Pancreas (tissue), 10 donors: ENCODE measurements at regions of chr2 and their contacts with region 1.

Region 1: GRCh38 chr2:48600204-48600813 is 17.3 kb upstream of the GTF2A1L start:
- DNase-seq: no peak
- ATAC-seq: peak in 3 of 4 donors; percentile 67 to 84 (median 79)
- H3K4me3 ChIP-seq: no peak overlapping the region
- H3K27ac ChIP-seq: no peak overlapping the region
- H3K4me1 ChIP-seq: no peaks in the 10 kb centered on the region
- H3K27me3 ChIP-seq: no peaks in the 10 kb centered on the region
- CTCF ChIP-seq: peak in 3 of 4 donors; percentile 43 to 56 (median 53)

Region 2: DNA sequence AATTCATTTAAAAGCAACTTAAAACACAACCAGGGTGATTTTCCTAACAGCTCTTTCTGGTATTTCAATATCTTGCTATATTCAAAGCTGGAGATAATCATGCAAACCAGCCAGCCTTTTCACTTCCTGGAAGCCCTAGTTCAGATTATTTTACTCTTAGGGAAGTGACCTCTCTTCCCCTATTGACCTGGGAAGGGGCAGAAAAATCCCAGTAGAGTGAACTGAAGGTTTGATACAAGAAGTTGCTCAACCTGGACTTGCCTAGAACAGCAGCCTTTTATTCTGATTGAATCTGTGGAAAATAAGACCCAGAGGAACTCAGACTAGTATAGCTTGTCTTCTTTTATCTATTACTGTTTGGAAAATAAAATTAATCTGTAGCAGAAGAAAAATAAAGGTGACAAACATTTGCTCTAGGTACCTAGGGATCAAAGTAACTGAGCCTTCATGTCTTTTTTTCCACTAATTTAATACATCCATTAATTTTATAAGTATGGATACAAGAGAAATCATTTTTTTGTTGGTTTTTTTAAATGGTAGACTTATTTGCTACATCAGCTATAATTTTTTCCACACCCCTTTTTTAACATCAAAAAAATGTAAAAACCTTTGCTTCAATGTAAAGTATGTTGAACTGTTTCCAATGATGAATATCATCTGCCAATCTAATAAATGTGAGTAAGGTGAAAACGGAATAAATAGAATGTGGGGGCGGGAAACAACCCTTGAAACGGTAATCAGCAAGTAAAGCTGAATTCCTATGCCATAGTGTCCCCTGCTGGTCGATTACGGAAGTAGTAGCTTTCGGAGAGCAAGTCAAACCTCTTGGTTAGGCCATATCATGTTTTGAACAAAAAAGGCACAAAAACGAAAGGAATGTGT is 1801.7 kb after region 1 on chr2:
- intact Hi-C with region 1: loop called in 1 of 3 experiments (anchors 10 kb)
- DNase-seq: peak in 4 of 6 donors; percentile 7 to 50 (median 20)
- ATAC-seq: peak in 3 of 4 donors; percentile 70 to 81 (median 74)
- H3K4me3 ChIP-seq: no peak overlapping the region
- H3K27ac ChIP-seq: no peak overlapping the region
- H3K4me1 ChIP-seq: no peaks in the 10 kb centered on the region
- H3K27me3 ChIP-seq: no peaks in the 10 kb centered on the region
- CTCF ChIP-seq: peak; percentile 48 to 75 (median 64)